Activated naive CD4-positive, alpha-beta T cell treated with anti-CD3 and anti-CD28 coated beads for 36 hours (primary cell): ENCODE measurements at regions of chr5 and their contacts with region 1.

Region 1: GRCh38 chr5:142881076-142881783 is 111.1 kb downstream of the ARHGAP26 start:
- DNase-seq: no peak
- H3K4me3 Mint-ChIP-seq: no peak overlapping the region
- H3K27ac Mint-ChIP-seq: no peak overlapping the region
- H3K4me1 Mint-ChIP-seq: no peaks in the 10 kb centered on the region
- H3K27me3 Mint-ChIP-seq: no peaks in the 10 kb centered on the region

Region 2: GRCh38 chr5:142720641-142721271 is 160.5 kb before region 1 on chr5:
- CTCF ChIA-PET with region 1: interaction called, 184 read pairs
- intact Hi-C with region 1: loop called (anchors 1 kb)
- DNase-seq: no peak
- H3K4me3 Mint-ChIP-seq: no peak overlapping the region
- H3K27ac Mint-ChIP-seq: no peak overlapping the region
- H3K4me1 Mint-ChIP-seq: peaks cover 6% of the 10 kb centered on the region
- H3K27me3 Mint-ChIP-seq: peaks cover 6% of the 10 kb centered on the region

Region 3: DNA sequence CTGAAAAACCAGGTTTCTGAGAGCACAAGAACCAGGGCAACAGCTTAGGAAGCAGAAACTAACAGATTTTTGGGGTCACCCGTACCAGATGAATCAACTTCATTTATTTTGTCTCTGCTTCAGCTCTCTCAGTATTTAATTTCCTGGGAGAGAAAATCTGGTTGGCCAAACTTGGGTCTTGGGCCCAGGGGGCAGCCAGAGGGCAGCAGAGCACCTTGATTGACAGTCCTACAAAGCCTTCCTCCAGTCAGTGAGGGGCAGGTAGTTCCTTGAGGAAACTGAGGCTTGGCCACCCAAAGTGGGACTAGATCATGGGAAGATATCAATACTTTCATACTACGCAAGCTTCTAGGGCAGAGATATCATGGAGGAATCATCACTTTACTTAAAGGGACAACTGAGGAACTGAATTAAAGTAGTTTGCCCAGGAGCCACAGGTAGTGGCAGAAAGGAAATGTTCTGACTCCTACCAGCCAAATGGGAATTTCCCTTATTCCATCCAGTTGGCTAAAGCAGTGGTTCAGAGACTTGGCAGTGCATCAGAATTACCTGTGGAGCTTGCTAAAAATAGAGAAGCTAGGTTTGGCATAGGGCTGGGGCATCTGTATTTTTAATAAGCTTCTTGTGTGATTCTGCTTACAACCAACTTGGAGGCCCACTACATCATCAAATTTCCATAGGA is 132.5 kb before region 1 on chr5:
- CTCF ChIA-PET with region 1: interaction called, 163 read pairs
- intact Hi-C with region 1: loop called (anchors 1 kb)
- DNase-seq: peak; percentile 76
- H3K4me3 Mint-ChIP-seq: no peak overlapping the region
- H3K27ac Mint-ChIP-seq: no peak overlapping the region
- H3K4me1 Mint-ChIP-seq: peaks cover 13% of the 10 kb centered on the region
- H3K27me3 Mint-ChIP-seq: no peaks in the 10 kb centered on the region

Region 4: DNA sequence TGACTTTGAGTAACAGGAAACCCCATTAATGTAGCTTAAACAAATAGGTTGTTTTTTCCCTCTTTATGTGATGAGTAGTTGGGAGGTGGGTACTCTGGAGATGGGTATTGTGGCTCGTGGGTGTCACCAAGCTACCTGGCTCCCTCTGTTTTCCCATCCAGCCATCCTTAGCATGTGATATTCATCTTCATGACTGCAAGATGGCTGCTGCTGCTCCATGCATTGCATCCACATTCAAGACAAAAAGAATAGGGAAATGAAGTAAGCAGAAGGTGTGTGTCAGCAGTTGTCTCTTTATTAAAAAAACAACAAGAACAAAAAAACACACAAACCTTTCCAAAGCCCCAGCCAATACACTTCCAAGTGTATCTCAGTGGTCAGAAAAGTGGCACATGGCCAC is 117.5 kb before region 1 on chr5:
- CTCF ChIA-PET with region 1: interaction called, 15 read pairs
- intact Hi-C with region 1: no loop called
- DNase-seq: no peak
- H3K4me3 Mint-ChIP-seq: no peak overlapping the region
- H3K27ac Mint-ChIP-seq: no peak overlapping the region
- H3K4me1 Mint-ChIP-seq: peaks cover 3% of the 10 kb centered on the region
- H3K27me3 Mint-ChIP-seq: no peaks in the 10 kb centered on the region

Region 5: DNA sequence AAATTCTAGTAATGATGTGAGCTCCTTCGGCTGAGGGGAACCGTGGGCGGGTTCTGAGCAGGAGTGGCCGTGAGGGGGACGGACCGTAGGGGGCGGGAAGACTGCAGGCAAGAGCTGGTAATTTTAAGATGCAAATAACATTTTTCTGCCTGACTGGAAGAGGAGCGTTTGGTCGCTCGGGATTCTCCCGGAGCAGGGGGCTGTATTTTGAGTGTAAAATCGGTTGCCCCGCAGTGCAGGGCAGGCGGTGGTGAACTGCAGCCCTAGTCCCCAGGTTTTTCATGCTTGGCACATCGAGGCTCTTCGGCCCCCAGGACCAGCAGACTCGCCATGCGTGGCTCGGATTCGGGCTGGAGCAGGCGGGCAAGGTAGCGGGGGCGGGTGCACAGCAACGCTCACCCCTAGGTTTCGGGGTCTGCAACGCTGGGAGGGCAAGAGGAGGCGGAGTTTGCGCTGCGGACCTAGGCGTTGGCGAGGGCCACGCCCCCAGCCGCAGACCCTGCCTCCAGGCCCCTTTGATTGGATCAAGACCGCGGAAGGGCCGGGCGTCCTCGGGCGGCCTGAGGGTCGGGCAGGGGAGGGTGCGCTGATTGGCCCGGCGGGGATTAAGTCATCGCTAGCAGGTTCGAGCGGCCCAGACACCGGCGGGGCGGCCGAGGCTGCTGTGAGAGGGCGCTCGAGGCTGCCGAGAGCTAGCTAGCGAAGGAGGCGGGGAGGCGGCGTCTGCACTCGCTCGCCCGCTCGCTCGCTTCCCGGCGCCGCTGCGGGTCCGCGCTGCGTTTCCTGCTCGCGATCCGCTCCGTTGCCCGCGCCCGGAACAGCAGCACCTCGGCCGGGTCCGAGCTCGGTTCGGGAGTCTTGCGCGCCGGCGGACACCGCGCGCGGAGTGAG is 111.2 kb before region 1 on chr5 and contains the start of gene ARHGAP26:
- CTCF ChIA-PET with region 1: interaction called, 12 read pairs
- intact Hi-C with region 1: loop called (anchors 1 kb)
- DNase-seq: peak; percentile 94
- H3K4me3 Mint-ChIP-seq: peak within 1 kb of the TSS; percentile 95
- H3K27ac Mint-ChIP-seq: peak within 1 kb of the TSS; percentile 81
- H3K4me1 Mint-ChIP-seq: peaks cover 37% of the 10 kb centered on the region
- H3K27me3 Mint-ChIP-seq: no peaks in the 10 kb centered on the region
- total RNA-seq, gene ARHGAP26: 17.0 to 19.5 TPM

Region 6: GRCh38 chr5:142864725-142865260 is 16.4 kb before region 1 on chr5:
- CTCF ChIA-PET with region 1: interaction called, 18 read pairs
- intact Hi-C with region 1: no loop called
- DNase-seq: no peak
- H3K4me3 Mint-ChIP-seq: no peak overlapping the region
- H3K27ac Mint-ChIP-seq: peak overlapping the region; percentile 89
- H3K4me1 Mint-ChIP-seq: peaks cover 30% of the 10 kb centered on the region
- H3K27me3 Mint-ChIP-seq: no peaks in the 10 kb centered on the region

Region 7: DNA sequence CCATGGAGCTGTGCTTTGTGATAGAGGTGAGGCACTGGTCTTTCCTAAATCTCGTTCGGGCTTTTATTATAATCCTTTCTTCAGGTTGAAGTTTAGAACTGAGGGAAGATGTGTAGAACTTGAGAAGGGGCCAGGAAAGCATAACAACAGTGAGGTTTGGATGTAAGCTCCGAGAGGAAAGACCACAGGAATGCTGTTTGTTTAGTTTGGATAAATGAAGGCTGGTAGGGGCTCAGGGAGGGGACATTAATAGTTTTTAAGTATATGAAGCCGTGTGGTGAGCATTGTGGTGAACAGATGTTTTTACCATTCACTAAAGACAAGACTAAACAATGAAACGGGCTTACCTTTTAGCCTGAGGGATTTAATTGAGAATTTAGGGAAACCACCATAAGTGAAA is 19.7 kb after region 1 on chr5:
- CTCF ChIA-PET with region 1: interaction called, 12 read pairs
- intact Hi-C with region 1: no loop called
- DNase-seq: no peak
- H3K4me3 Mint-ChIP-seq: no peak overlapping the region
- H3K27ac Mint-ChIP-seq: no peak overlapping the region
- H3K4me1 Mint-ChIP-seq: no peaks in the 10 kb centered on the region
- H3K27me3 Mint-ChIP-seq: no peaks in the 10 kb centered on the region